Heart left ventricle (tissue), 16 donors: ENCODE measurements at regions of chr15 and their contacts with region 1.

Region 1: DNA sequence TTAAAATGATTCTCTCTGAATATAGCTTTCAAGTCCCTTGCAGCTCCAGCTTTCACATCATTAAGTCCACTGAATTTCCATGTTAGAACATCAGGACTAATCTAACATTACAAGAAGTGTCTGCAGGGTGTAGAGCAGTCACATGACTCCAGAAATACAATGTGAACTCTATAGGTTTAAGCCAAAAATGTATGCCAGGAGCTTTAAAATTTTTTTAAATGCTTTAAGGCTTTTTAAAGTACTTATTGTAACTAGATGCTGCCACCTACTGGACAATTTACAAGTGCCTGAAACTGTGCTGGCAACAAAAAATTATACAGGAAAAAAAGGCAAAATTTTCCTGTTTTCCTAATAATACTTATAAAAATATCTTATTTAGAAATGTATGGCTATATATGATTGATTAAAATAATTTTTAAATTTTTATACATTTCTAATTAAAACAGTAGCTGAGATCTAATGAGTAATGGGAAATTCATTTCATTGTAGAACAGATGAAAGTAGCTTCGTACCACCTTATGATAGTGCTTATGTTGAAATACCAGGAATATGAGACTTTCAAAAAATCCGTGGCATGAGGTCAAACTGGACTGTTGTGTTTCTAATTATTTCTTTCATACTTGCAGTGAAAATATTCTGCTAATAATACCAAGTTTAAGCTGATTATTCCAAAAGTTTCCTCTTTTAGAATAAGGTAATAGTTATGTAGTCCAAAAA is 25.7 kb downstream of the FSIP1 start:
- DNase-seq: no peak
- ATAC-seq: no peak
- H3K4me3 ChIP-seq: no peak overlapping the region
- H3K27ac ChIP-seq: no peak overlapping the region
- H3K4me1 ChIP-seq: no peaks in the 10 kb centered on the region
- H3K27me3 ChIP-seq: no peaks in the 10 kb centered on the region
- CTCF ChIP-seq: peak; percentile 81 to 95 (median 84)
- POLR2A ChIP-seq: no peak

Region 2: GRCh38 chr15:38707802-38708671 is 1048.9 kb before region 1 on chr15:
- intact Hi-C with region 1: loop called in 9 of 10 experiments (anchors 5 to 10 kb)
- DNase-seq: no peak
- ATAC-seq: peak in 3 of 4 donors; percentile 77 to 90 (median 85)
- H3K4me3 ChIP-seq: no peak overlapping the region
- H3K27ac ChIP-seq: no peak overlapping the region
- H3K4me1 ChIP-seq: peaks cover 0 to 3% (median 0%) of the 10 kb centered on the region in 12 donors
- H3K27me3 ChIP-seq: peaks cover 0 to 16% (median 0%) of the 10 kb centered on the region in 9 donors
- CTCF ChIP-seq: peak; percentile 45 to 76 (median 64)
- POLR2A ChIP-seq: no peak

Region 3: GRCh38 chr15:39171944-39172368 is 585.0 kb before region 1 on chr15:
- intact Hi-C with region 1: loop called in 6 of 10 experiments (anchors 5 to 10 kb)
- DNase-seq: peak in 4 of 5 donors; percentile 38 to 64 (median 48)
- ATAC-seq: peak; percentile 59 to 96 (median 94)
- H3K4me3 ChIP-seq: no peak overlapping the region
- H3K27ac ChIP-seq: peak overlapping the region in 7 of 12 donors; percentile 5 to 66 (median 23)
- H3K4me1 ChIP-seq: peaks cover 0 to 23% (median 8%) of the 10 kb centered on the region in 12 donors
- H3K27me3 ChIP-seq: no peaks in the 10 kb centered on the region
- CTCF ChIP-seq: peak; percentile 16 to 61 (median 42)
- POLR2A ChIP-seq: no peak

Region 4: DNA sequence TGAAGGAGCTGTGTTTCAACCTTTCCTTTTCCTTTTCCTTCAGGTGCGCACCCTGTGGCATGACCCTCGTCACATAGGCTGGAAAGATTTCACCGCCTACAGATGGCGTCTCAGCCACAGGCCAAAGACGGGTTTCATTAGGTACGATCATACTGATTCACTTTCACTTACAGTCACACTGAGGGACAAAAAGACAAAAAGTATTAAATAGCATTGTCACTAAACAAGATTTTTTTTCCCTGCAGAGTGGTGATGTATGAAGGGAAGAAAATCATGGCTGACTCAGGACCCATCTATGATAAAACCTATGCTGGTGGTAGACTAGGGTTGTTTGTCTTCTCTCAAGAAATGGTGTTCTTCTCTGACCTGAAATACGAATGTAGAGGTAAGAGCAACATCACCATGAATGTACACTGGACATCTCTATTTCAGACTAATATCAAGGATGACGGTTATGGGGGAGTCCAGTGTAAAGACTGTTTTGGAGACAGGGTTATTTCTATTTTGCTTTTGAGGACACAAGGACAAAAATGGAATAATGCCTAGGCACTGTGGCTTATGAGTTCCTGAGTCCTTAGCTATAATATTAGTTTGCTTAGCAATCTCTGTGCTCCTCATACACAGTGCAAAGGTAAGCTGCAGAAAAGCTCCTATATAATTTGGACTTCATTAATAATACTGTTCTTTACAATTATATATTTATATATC is 162.8 kb before region 1 on chr15:
- intact Hi-C with region 1: loop called in 6 of 10 experiments (anchors 5 to 10 kb)
- DNase-seq: no peak
- ATAC-seq: no peak
- H3K4me3 ChIP-seq: no peak overlapping the region
- H3K27ac ChIP-seq: no peak overlapping the region
- H3K4me1 ChIP-seq: peaks cover 0 to 12% (median 0%) of the 10 kb centered on the region in 12 donors
- H3K27me3 ChIP-seq: no peaks in the 10 kb centered on the region
- CTCF ChIP-seq: no peak
- POLR2A ChIP-seq: no peak

Region 5: GRCh38 chr15:39605146-39605545 is 151.8 kb before region 1 on chr15:
- intact Hi-C with region 1: no loop called
- DNase-seq: no peak
- ATAC-seq: no peak
- H3K4me3 ChIP-seq: no peak overlapping the region
- H3K27ac ChIP-seq: no peak overlapping the region
- H3K4me1 ChIP-seq: peaks cover 0 to 6% (median 0%) of the 10 kb centered on the region in 12 donors
- H3K27me3 ChIP-seq: no peaks in the 10 kb centered on the region
- CTCF ChIP-seq: no peak
- POLR2A ChIP-seq: no peak

Region 6: GRCh38 chr15:39804026-39804425 is 47.1 kb after region 1 on chr15:
- intact Hi-C with region 1: no loop called
- DNase-seq: no peak
- ATAC-seq: no peak
- H3K4me3 ChIP-seq: no peak overlapping the region
- H3K27ac ChIP-seq: no peak overlapping the region
- H3K4me1 ChIP-seq: peaks cover 0 to 6% (median 0%) of the 10 kb centered on the region in 12 donors
- H3K27me3 ChIP-seq: peaks cover 0 to 4% (median 0%) of the 10 kb centered on the region in 9 donors
- CTCF ChIP-seq: no peak
- POLR2A ChIP-seq: no peak